ENCODE measurements at regions of chr1 and their contacts with region 1.

Region 1: DNA sequence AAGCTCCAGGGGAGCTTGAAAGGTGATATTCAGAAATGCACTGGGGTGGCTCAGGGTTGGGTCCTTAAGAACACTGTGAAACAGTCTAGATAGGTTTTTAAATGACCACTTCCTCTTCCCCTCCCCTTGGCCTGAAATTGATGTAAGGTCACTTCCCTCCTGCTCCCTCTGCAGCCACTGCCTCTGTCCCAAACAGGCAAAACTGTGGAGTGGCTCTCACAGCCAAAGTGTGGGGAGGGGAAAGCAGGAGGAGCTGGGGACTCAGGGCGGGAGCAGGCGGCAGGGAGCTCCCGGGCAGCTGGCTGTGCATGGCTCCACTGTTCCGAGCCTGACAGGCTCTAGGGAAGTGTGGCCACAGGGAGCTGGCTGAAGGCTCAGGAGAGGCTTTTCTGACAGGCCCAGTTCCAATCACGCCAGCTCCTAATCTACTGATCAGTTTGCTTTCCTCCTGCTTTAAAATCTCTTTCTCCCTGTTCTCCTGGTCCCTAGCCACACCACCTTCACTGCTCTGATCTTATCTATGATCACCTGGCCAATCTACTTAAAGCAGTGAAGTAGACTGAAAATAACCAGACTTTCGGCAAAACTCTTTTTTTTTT is 5.1 kb upstream of the CSRP1 start:
- DNase-seq: no peak
- ATAC-seq: peak in 1 of 3 donors; percentile 40
- H3K4me3 ChIP-seq: no peak overlapping the region
- H3K4me3 Mint-ChIP-seq: no peak overlapping the region
- H3K27ac ChIP-seq: no peak overlapping the region
- H3K27ac Mint-ChIP-seq: no peak overlapping the region
- H3K4me1 ChIP-seq: peaks cover 10% of the 10 kb centered on the region
- H3K4me1 Mint-ChIP-seq: peaks cover 0 to 8% of the 10 kb centered on the region in 2 donors
- H3K27me3 ChIP-seq: no peaks in the 10 kb centered on the region
- H3K27me3 Mint-ChIP-seq: no peaks in the 10 kb centered on the region
- CTCF ChIP-seq: no peak

Region 2: DNA sequence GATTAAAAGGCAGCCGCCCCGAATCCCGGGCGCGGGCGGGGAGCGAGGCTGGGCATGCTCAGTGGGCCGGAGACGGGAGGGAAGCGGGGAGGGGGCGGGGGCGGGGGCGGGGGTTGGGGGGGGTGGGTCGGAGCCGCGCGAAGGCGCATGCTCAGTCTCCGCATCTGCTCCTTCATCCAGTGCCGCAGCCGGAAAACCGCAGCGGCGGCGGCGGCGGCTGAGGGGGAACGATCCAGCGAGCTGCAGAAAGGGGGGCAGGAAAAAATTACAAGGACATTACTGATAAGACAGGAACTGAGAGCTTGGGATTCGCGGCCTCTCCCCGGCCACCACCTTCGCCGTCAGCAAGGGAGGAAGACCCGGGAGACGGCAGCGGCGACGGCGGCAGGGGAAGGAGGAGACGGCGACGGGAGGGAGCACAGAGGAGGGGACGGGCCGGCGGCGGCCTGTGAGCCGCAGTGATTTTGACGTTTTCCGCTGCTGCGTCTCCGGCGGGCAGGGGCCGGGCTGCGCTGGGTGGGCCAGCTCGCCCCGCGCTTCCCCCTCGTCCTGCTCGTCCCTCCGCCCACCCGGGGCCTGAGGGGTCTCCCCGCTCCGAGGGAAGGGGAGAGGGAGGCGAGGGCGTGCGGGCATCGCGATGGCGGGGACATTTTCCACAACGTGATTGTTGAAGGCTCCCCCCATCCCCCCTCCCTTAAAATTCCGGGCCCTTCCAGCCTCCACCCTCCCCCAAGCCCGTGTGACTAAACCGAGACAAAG is 773.1 kb before region 1 on chr1 and contains the start of gene CAMSAP2:
- intact Hi-C with region 1: no loop called
- DNase-seq: peak; percentile 27 to 85
- ATAC-seq: peak; percentile 66 to 85 (median 79)
- H3K4me3 ChIP-seq: peak within 1 kb of the TSS; percentile 60
- H3K4me3 Mint-ChIP-seq: peak within 1 kb of the TSS; percentile 96
- H3K27ac ChIP-seq: no peak within 1 kb of the TSS
- H3K27ac Mint-ChIP-seq: peak within 1 kb of the TSS in 1 of 2 donors; percentile 63
- H3K4me1 ChIP-seq: peaks cover 10% of the 10 kb centered on the region
- H3K4me1 Mint-ChIP-seq: peaks cover 12 to 15% of the 10 kb centered on the region in 2 donors
- H3K27me3 ChIP-seq: peaks cover 8% of the 10 kb centered on the region
- H3K27me3 Mint-ChIP-seq: peaks cover 24 to 33% of the 10 kb centered on the region in 2 donors
- CTCF ChIP-seq: no peak
- total RNA-seq, gene CAMSAP2: 0.25 to 0.89 (median 0.50) TPM

Region 3: DNA sequence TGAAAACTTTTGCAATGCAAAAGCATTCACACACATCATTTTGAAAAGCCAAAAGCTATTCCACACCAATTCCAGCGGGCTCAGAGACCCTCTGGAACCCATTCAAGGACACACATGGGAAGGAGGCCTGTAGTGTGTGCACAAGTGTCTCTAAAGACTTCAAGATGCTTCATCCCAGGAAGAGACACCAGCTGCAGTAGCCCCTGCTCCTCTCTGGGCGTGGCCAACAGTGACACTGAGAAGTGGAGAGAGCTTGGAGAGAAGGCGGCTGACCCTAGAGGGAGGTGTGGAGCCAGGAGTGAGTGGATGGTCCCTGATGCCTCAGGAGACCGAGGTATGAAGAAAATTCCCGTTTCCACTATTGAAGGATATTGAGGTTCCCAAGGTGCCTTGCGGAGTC is 75.6 kb before region 1 on chr1:
- intact Hi-C with region 1: loop called (anchors 5 kb)
- DNase-seq: no peak
- ATAC-seq: no peak
- H3K4me3 ChIP-seq: no peak overlapping the region
- H3K4me3 Mint-ChIP-seq: no peak overlapping the region
- H3K27ac ChIP-seq: no peak overlapping the region
- H3K27ac Mint-ChIP-seq: peak overlapping the region; percentile 57 to 62
- H3K4me1 ChIP-seq: peaks cover 3% of the 10 kb centered on the region
- H3K4me1 Mint-ChIP-seq: peaks cover 10% of the 10 kb centered on the region in 2 donors
- H3K27me3 ChIP-seq: no peaks in the 10 kb centered on the region
- H3K27me3 Mint-ChIP-seq: peaks cover 2 to 11% of the 10 kb centered on the region in 2 donors
- CTCF ChIP-seq: no peak

Region 4: GRCh38 chr1:201447911-201448871 is 63.8 kb before region 1 on chr1:
- intact Hi-C with region 1: loop called (anchors 2 kb)
- DNase-seq: peak; percentile 37 to 76
- ATAC-seq: peak; percentile 71 to 90 (median 79)
- H3K4me3 ChIP-seq: no peak overlapping the region
- H3K4me3 Mint-ChIP-seq: no peak overlapping the region
- H3K27ac ChIP-seq: no peak overlapping the region
- H3K27ac Mint-ChIP-seq: peak overlapping the region in 1 of 2 donors; percentile 42
- H3K4me1 ChIP-seq: peaks cover 3% of the 10 kb centered on the region
- H3K4me1 Mint-ChIP-seq: peaks cover 14 to 43% of the 10 kb centered on the region in 2 donors
- H3K27me3 ChIP-seq: no peaks in the 10 kb centered on the region
- H3K27me3 Mint-ChIP-seq: no peaks in the 10 kb centered on the region
- CTCF ChIP-seq: peak; percentile 82

Region 5: GRCh38 chr1:201481761-201482493 is 30.1 kb before region 1 on chr1:
- intact Hi-C with region 1: loop called (anchors 1 kb)
- DNase-seq: peak; percentile 67 to 86
- ATAC-seq: peak; percentile 85 to 91 (median 87)
- H3K4me3 ChIP-seq: no peak overlapping the region
- H3K4me3 Mint-ChIP-seq: peak overlapping the region; percentile 67
- H3K27ac ChIP-seq: no peak overlapping the region
- H3K27ac Mint-ChIP-seq: no peak overlapping the region
- H3K4me1 ChIP-seq: peaks cover 19% of the 10 kb centered on the region
- H3K4me1 Mint-ChIP-seq: peaks cover 12 to 20% of the 10 kb centered on the region in 2 donors
- H3K27me3 ChIP-seq: peaks cover 9% of the 10 kb centered on the region
- H3K27me3 Mint-ChIP-seq: peaks cover 11 to 14% of the 10 kb centered on the region in 2 donors
- CTCF ChIP-seq: peak; percentile 73

Region 6: DNA sequence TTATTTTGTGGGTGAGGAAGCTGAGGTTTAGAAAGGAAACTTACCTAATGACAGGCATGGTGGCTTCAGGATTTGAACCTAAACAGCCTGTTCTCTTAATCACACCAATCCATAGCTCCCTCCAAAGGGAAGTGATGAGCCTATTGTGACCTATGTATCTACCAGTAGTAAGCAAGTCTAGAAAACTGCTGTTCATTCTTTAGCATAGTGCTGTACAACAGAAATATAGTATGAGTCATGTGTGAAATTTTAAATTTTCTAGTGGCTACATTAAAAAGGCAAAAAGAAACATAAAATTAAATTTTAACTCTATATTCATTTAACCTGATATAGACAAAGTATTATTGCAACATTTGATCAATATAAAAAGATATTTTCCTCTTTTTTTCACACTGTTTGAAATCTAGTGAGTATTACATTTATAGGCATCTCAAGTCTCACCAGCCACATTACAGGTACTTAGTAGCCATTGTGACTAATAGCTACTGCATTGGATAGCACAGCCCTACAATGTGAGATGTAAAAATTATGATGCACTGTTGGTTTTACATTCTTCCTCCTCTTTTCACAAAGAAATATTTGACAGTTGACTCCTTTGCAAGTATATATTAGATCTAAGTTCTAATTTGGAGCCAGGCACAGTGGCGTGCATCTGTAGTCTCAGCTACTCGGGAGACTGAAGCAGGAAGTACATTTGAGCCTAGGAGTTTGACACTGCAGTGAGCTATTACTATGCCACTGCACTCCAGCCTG is 333.5 kb after region 1 on chr1:
- intact Hi-C with region 1: no loop called
- DNase-seq: no peak
- ATAC-seq: peak in 1 of 3 donors; percentile 35
- H3K4me3 ChIP-seq: no peak overlapping the region
- H3K4me3 Mint-ChIP-seq: no peak overlapping the region
- H3K27ac ChIP-seq: no peak overlapping the region
- H3K27ac Mint-ChIP-seq: peak overlapping the region in 1 of 2 donors; percentile 14
- H3K4me1 ChIP-seq: no peaks in the 10 kb centered on the region
- H3K4me1 Mint-ChIP-seq: peaks cover 15 to 37% of the 10 kb centered on the region in 2 donors
- H3K27me3 ChIP-seq: no peaks in the 10 kb centered on the region
- H3K27me3 Mint-ChIP-seq: no peaks in the 10 kb centered on the region
- CTCF ChIP-seq: no peak

Measured in natural killer cell (primary cell).